ENCODE measurements at regions of chr3 and their contacts with region 1.

Region 1: GRCh38 chr3:45593708-45594609 is 592 bp upstream of the LIMD1 start:
- DNase-seq: peak; percentile 84
- ATAC-seq: peak; percentile 66
- H3K4me3 ChIP-seq: peak overlapping the region; percentile 57 to 90 (median 81)
- H3K4me3 Mint-ChIP-seq: peak overlapping the region; percentile 90
- H3K27ac ChIP-seq: peak overlapping the region; percentile 76 to 82
- H3K27ac Mint-ChIP-seq: peak overlapping the region; percentile 91
- H3K4me1 ChIP-seq: peaks cover 38 to 58% of the 10 kb centered on the region in 2 donors
- H3K4me1 Mint-ChIP-seq: peaks cover 56% of the 10 kb centered on the region
- H3K27me3 ChIP-seq: no peaks in the 10 kb centered on the region
- H3K27me3 Mint-ChIP-seq: no peaks in the 10 kb centered on the region
- CTCF ChIP-seq: no peak

Region 2: DNA sequence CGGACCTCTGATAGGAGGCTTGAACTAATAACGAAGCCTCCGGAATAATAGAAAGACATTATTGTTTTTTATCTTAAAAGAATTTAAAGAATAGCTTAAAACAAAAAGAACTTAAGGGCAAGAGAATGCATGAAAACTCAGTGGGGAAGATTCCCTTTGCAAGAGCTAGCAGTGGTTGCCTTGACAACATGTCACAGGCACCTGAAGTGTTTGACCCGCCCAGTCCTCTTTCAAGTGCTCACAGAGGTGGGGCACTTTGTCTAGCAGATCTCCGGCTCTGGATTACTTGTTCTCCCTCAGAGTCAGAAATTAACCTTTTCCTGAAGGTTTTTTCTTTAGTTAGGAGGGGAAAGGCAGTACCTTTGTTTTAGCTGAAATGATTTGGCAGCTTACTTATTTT is 167.8 kb before region 1 on chr3:
- CTCF ChIA-PET with region 1: no interaction called
- POLR2A ChIA-PET with region 1: no interaction called
- intact Hi-C with region 1: no loop called
- DNase-seq: no peak
- ATAC-seq: no peak
- H3K4me3 ChIP-seq: no peak overlapping the region
- H3K4me3 Mint-ChIP-seq: no peak overlapping the region
- H3K27ac ChIP-seq: no peak overlapping the region
- H3K27ac Mint-ChIP-seq: no peak overlapping the region
- H3K4me1 ChIP-seq: no peaks in the 10 kb centered on the region
- H3K4me1 Mint-ChIP-seq: peaks cover 3% of the 10 kb centered on the region
- H3K27me3 ChIP-seq: no peaks in the 10 kb centered on the region
- H3K27me3 Mint-ChIP-seq: no peaks in the 10 kb centered on the region
- CTCF ChIP-seq: no peak

Region 3: DNA sequence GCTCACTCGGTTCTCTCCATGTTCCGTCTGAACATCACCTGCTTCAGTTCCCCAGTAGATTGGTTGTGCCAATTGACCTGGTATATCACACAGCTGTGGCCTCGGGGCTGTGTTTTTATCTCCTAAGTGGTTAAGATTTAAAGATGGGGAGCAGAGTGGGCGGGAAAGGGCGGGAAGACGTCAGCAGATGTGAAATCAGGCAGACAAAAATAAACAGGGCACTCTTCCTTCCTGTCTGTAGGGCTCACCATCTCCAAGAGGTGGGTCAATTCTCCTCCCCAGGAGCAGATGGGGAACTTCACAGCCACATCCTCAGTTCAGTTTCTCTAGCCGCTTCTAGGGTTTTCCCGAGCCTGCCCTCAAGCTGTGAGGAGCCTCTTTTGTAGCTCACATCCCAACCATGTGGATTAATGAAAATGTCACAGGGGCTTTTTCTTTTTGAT is 26.2 kb before region 1 on chr3:
- CTCF ChIA-PET with region 1: interaction called, 5 read pairs
- POLR2A ChIA-PET with region 1: interaction called, 9 read pairs
- intact Hi-C with region 1: loop called (anchors 1 kb)
- DNase-seq: peak; percentile 78
- ATAC-seq: peak; percentile 75
- H3K4me3 ChIP-seq: no peak overlapping the region
- H3K4me3 Mint-ChIP-seq: peak overlapping the region; percentile 71
- H3K27ac ChIP-seq: peak overlapping the region; percentile 49 to 69
- H3K27ac Mint-ChIP-seq: peak overlapping the region; percentile 84
- H3K4me1 ChIP-seq: peaks cover 50 to 58% of the 10 kb centered on the region in 2 donors
- H3K4me1 Mint-ChIP-seq: peaks cover 54% of the 10 kb centered on the region
- H3K27me3 ChIP-seq: no peaks in the 10 kb centered on the region
- H3K27me3 Mint-ChIP-seq: no peaks in the 10 kb centered on the region
- CTCF ChIP-seq: no peak

Region 4: DNA sequence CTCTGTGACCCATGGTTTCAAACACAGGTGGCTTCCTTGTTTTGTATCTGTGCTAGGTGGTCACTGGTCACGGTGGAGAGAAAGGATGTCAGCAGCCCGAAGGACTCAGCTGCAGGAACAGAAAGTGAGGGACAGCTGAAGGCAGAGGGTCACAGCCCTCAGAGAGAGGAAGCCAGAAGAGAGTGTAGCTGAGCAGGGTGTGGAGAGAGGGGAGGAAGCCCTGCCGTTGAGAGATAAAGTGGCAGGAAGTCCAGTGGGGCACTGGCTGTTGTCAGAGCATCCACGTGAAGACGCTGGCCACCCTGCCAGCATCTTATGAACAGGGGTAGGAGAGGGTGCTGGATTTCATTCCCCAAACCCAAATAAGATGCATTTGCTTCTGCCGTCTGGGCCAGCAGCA is 37.5 kb after region 1 on chr3:
- CTCF ChIA-PET with region 1: interaction called, 6 read pairs
- POLR2A ChIA-PET with region 1: no interaction called
- intact Hi-C with region 1: loop called (anchors 5 kb)
- DNase-seq: peak; percentile 19
- ATAC-seq: peak; percentile 47
- H3K4me3 ChIP-seq: no peak overlapping the region
- H3K4me3 Mint-ChIP-seq: peak overlapping the region; percentile 59
- H3K27ac ChIP-seq: peak overlapping the region in 1 of 2 donors; percentile 45
- H3K27ac Mint-ChIP-seq: peak overlapping the region; percentile 91
- H3K4me1 ChIP-seq: peaks cover 20 to 27% of the 10 kb centered on the region in 2 donors
- H3K4me1 Mint-ChIP-seq: peaks cover 57% of the 10 kb centered on the region
- H3K27me3 ChIP-seq: no peaks in the 10 kb centered on the region
- H3K27me3 Mint-ChIP-seq: no peaks in the 10 kb centered on the region
- CTCF ChIP-seq: no peak

Region 5: DNA sequence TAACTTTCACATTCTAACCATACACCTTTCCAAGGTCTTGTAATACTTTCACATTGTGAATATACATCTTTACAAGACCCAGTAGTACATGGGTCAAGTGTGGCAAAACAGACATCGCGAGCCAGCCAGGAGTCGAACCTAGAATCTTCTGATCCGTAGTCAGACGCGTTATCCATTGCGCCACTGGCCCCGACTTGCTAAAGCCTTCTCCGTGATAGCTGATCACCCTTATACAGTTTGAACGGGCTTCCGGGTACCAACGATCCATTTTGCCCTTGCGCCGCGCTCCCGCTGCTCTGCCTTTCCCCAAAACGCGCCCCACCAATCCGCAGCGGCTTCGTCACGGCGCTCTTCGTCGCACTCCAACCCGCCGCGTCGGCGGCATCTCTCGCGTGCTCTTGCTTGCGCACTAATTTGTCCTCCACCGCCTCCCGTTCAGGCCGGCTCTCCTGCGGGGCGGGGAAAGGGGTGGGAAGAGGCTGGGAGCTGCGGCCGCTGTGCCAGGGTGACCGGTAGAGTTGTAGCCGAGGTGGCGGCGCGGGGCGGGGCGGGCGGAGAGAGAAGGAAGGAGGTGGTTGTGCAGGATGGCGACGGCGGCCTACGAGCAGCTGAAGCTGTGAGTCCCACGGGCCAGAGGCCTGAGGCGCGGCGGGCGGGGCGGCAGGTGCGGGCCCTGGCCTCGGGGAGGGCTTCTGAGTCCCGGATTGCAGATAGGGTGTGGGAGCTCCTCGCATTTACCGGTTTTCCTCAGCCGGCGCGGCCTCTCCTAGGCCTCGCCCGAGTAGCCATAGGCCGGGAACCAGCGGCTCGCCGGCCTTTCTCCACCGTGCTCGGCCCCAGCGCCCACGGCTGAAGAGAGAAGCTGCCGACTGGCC is 95.2 kb after region 1 on chr3 and contains the start of gene SACM1L:
- CTCF ChIA-PET with region 1: interaction called, 5 read pairs
- POLR2A ChIA-PET with region 1: interaction called, 8 read pairs
- intact Hi-C with region 1: loop called (anchors 1 kb)
- DNase-seq: peak; percentile 99
- ATAC-seq: peak; percentile 85
- H3K4me3 ChIP-seq: peak within 1 kb of the TSS; percentile 69 to 96 (median 82)
- H3K4me3 Mint-ChIP-seq: peak within 1 kb of the TSS; percentile 93
- H3K27ac ChIP-seq: peak within 1 kb of the TSS; percentile 75 to 85
- H3K27ac Mint-ChIP-seq: peak within 1 kb of the TSS; percentile 99
- H3K4me1 ChIP-seq: peaks cover 38 to 44% of the 10 kb centered on the region in 2 donors
- H3K4me1 Mint-ChIP-seq: peaks cover 55% of the 10 kb centered on the region
- H3K27me3 ChIP-seq: no peaks in the 10 kb centered on the region
- H3K27me3 Mint-ChIP-seq: peaks cover 3% of the 10 kb centered on the region
- CTCF ChIP-seq: no peak
- total RNA-seq, gene SACM1L: 85.7 and 88.2 TPM in 2 replicates

Region 6: GRCh38 chr3:45807681-45808540 is 214.0 kb after region 1 on chr3:
- CTCF ChIA-PET with region 1: no interaction called
- POLR2A ChIA-PET with region 1: no interaction called
- intact Hi-C with region 1: no loop called
- DNase-seq: no peak
- ATAC-seq: no peak
- H3K4me3 ChIP-seq: no peak overlapping the region
- H3K4me3 Mint-ChIP-seq: no peak overlapping the region
- H3K27ac ChIP-seq: no peak overlapping the region
- H3K27ac Mint-ChIP-seq: no peak overlapping the region
- H3K4me1 ChIP-seq: no peaks in the 10 kb centered on the region
- H3K4me1 Mint-ChIP-seq: no peaks in the 10 kb centered on the region
- H3K27me3 ChIP-seq: no peaks in the 10 kb centered on the region
- H3K27me3 Mint-ChIP-seq: no peaks in the 10 kb centered on the region
- CTCF ChIP-seq: no peak

Measured in B cell (primary cell).